ENCODE measurements at regions of chr14 and their contacts with region 1.

Region 1: GRCh38 chr14:103078093-103078749 is 5.8 kb upstream of the LBHD2 start:
- DNase-seq: peak; percentile 72 to 82
- ATAC-seq: peak in 4 of 8 donors; percentile 25 to 45 (median 38)
- H3K4me3 ChIP-seq: no peak overlapping the region
- H3K27ac ChIP-seq: no peak overlapping the region
- H3K4me1 ChIP-seq: peaks cover 3 to 30% (median 23%) of the 10 kb centered on the region in 9 donors
- H3K27me3 ChIP-seq: peaks cover 0 to 21% (median 3%) of the 10 kb centered on the region in 7 donors
- CTCF ChIP-seq: peak; percentile 39 to 75 (median 70)

Region 2: GRCh38 chr14:103023881-103024473 is 54.2 kb before region 1 on chr14:
- intact Hi-C with region 1: loop called in 1 of 10 experiments (anchors 1 kb)
- DNase-seq: peak in 1 of 2 donors; percentile 52
- ATAC-seq: peak; percentile 72 to 87 (median 80)
- H3K4me3 ChIP-seq: peak overlapping the region in 6 of 10 donors; percentile 3 to 24 (median 12)
- H3K27ac ChIP-seq: peak overlapping the region in 9 of 10 donors; percentile 17 to 85 (median 73)
- H3K4me1 ChIP-seq: peaks cover 0 to 75% (median 54%) of the 10 kb centered on the region in 9 donors
- H3K27me3 ChIP-seq: no peaks in the 10 kb centered on the region
- CTCF ChIP-seq: no peak

Region 3: GRCh38 chr14:103057365-103058096 is 20.7 kb before region 1 on chr14 and contains the start of gene CDC42BPB:
- intact Hi-C with region 1: loop called in 2 of 10 experiments (anchors 1 to 2 kb)
- DNase-seq: peak; percentile 89 to 91
- ATAC-seq: peak; percentile 89 to 96 (median 94)
- H3K4me3 ChIP-seq: peak within 1 kb of the TSS; percentile 85 to 100 (median 98)
- H3K27ac ChIP-seq: peak within 1 kb of the TSS; percentile 95 to 100 (median 97)
- H3K4me1 ChIP-seq: peaks cover 12 to 55% (median 45%) of the 10 kb centered on the region in 9 donors
- H3K27me3 ChIP-seq: peaks cover 0 to 30% (median 0%) of the 10 kb centered on the region in 7 donors
- CTCF ChIP-seq: no peak
- total RNA-seq, gene CDC42BPB: 60.8 to 83.6 (median 70.1) TPM

Region 4: DNA sequence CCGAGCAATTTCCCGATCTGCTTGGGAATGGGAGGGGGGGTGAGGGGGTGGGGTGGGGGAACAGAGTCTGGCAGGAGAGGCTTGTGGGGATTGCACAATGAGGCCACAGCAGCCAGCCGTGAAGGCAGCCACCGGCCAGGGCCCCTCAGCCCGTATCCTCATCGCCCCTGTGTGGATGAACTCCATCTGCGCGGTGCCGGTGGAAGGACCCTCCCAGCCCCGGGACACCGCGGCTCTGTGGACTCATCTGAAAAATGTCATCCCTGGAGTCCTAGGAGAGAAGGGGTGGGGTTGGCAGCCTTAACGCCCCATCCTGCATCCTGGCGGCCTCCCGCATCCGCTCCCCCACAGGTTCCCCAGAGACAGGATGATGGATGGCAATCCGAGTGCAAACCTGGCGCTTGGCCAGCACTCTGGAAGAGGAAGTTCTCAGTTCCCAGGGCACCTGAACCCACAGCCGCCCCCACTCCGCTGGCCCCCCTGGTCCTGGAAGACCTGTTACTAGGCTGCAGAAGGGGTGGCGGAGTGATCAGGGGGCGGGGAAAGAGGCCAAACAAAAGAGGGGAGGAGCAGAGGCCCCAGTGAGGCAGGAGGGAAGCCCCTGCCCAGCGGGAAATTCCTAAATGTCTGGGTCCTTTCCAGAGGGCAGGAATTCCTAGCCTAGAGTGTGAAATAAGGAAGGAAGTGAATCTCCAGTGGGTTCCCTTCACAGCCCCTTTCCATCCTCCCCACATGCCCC is 43.8 kb after region 1 on chr14:
- intact Hi-C with region 1: loop called in 1 of 10 experiments (anchors 5 kb)
- DNase-seq: peak; percentile 88 to 89
- ATAC-seq: peak; percentile 24 to 61 (median 54)
- H3K4me3 ChIP-seq: peak overlapping the region in 9 of 10 donors; percentile 56 to 95 (median 86)
- H3K27ac ChIP-seq: peak overlapping the region; percentile 64 to 99 (median 97)
- H3K4me1 ChIP-seq: peaks cover 27 to 93% (median 77%) of the 10 kb centered on the region in 9 donors
- H3K27me3 ChIP-seq: peaks cover 0 to 6% (median 0%) of the 10 kb centered on the region in 7 donors
- CTCF ChIP-seq: no peak

Region 5: GRCh38 chr14:103185051-103185992 is 107.1 kb after region 1 on chr14:
- intact Hi-C with region 1: loop called in 1 of 10 experiments (anchors 5 kb)
- DNase-seq: no peak
- ATAC-seq: no peak
- H3K4me3 ChIP-seq: no peak overlapping the region
- H3K27ac ChIP-seq: no peak overlapping the region
- H3K4me1 ChIP-seq: peaks cover 0 to 12% (median 10%) of the 10 kb centered on the region in 9 donors
- H3K27me3 ChIP-seq: peaks cover 0 to 49% (median 32%) of the 10 kb centered on the region in 7 donors
- CTCF ChIP-seq: peak; percentile 52 to 73 (median 66)

Region 6: DNA sequence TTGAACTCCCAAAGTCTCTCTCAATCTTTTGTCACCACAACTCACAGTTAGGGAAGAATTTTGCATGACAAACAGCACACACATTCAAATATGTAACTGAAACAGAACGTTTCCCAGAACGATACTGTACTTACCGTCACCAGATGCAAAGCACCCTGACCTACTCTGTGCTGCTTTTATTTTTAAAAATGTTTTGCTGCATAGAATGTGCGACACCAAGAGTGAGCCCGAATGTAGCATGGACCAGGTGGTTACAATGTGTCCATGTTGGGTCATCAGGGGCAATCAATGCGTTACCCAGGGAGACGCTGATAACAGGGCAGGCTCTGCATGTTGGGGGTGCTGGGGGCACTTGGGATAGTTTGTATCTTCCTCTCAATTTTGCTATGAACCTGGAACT is 241.2 kb after region 1 on chr14:
- intact Hi-C with region 1: no loop called
- DNase-seq: no peak
- ATAC-seq: no peak
- H3K4me3 ChIP-seq: no peak overlapping the region
- H3K27ac ChIP-seq: no peak overlapping the region
- H3K4me1 ChIP-seq: peaks cover 0 to 17% (median 4%) of the 10 kb centered on the region in 9 donors
- H3K27me3 ChIP-seq: peaks cover 0 to 23% (median 0%) of the 10 kb centered on the region in 7 donors
- CTCF ChIP-seq: no peak

Measured in heart right ventricle (tissue), 16 donors.